ENCODE measurements at regions of chr17 and their contacts with region 1.

Region 1: GRCh38 chr17:45218895-45219661 is 2.6 kb upstream of the FMNL1 start:
- DNase-seq: peak; percentile 60 to 76
- ATAC-seq: peak; percentile 83 to 92
- H3K4me3 ChIP-seq: no peak overlapping the region
- H3K27ac ChIP-seq: no peak overlapping the region
- H3K4me1 ChIP-seq: peaks cover 0 to 4% of the 10 kb centered on the region in 2 donors
- H3K27me3 ChIP-seq: peaks cover 0 to 4% (median 0%) of the 10 kb centered on the region in 3 donors
- CTCF ChIP-seq: peak; percentile 89 to 99 (median 95)
- POLR2A ChIP-seq: no peak

Region 2: GRCh38 chr17:45235416-45236281 is 16.6 kb after region 1 on chr17:
- in situ Hi-C with region 1: no loop called
- intact Hi-C with region 1: loop called (anchors 1 kb)
- DNase-seq: peak; percentile 49 to 65
- ATAC-seq: peak; percentile 68 to 69
- H3K4me3 ChIP-seq: no peak overlapping the region
- H3K27ac ChIP-seq: no peak overlapping the region
- H3K4me1 ChIP-seq: peaks cover 1 to 3% of the 10 kb centered on the region in 2 donors
- H3K27me3 ChIP-seq: no peaks in the 10 kb centered on the region
- CTCF ChIP-seq: peak; percentile 53 to 85 (median 78)
- POLR2A ChIP-seq: no peak

Region 3: GRCh38 chr17:45247429-45248131 is 28.5 kb after region 1 on chr17:
- in situ Hi-C with region 1: no loop called
- intact Hi-C with region 1: no loop called
- DNase-seq: peak; percentile 43 to 69
- ATAC-seq: peak; percentile 47 to 60
- H3K4me3 ChIP-seq: peak overlapping the region; percentile 49 to 62 (median 56)
- H3K27ac ChIP-seq: peak overlapping the region in 1 of 4 donors; percentile 17
- H3K4me1 ChIP-seq: peaks cover 9 to 13% of the 10 kb centered on the region in 2 donors
- H3K27me3 ChIP-seq: peaks cover 0 to 13% (median 0%) of the 10 kb centered on the region in 3 donors
- CTCF ChIP-seq: no peak
- POLR2A ChIP-seq: peak in 1 of 2 donors; percentile 20

Region 4: GRCh38 chr17:45311760-45312476 is 92.8 kb after region 1 on chr17:
- in situ Hi-C with region 1: no loop called
- intact Hi-C with region 1: no loop called
- DNase-seq: peak; percentile 92 to 96
- ATAC-seq: peak; percentile 67 to 72
- H3K4me3 ChIP-seq: peak overlapping the region; percentile 3 to 50 (median 30)
- H3K27ac ChIP-seq: peak overlapping the region; percentile 88 to 98 (median 94)
- H3K4me1 ChIP-seq: peaks cover 86 to 91% of the 10 kb centered on the region in 2 donors
- H3K27me3 ChIP-seq: no peaks in the 10 kb centered on the region
- CTCF ChIP-seq: peak in 1 of 5 experiments; percentile 2
- POLR2A ChIP-seq: peak; percentile 80 to 89

Region 5: DNA sequence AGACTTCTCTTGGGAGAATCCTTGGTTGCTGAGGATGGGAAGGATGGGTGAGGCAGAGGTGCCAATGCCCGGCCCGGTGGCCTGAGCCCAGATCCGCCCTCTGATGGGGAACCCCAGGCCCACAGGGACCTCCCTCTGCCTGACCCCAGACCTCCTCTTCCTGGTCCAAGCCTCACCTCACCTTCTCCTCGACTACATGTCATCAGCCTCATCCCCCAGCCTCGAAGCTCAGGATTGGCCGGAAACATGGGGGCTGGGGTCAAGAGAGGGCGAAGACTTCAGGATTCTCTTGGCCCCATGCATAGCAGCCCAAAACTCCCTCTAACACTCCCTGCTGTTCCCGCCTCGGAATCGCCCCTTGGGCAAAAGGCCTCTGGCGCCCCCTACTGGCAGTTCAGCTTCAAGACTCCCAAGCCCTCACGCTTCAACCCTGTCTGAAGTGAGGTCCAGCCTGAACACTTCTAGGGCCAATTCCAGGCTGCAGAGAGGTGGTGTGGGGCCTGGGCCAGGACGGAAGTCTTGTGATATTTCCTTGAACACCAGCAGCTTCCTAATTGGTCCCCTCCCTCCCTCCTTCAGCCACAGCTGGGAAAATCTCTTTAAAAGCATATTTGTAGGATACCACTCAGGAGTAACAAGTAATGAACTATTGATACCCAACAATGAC is 166.4 kb after region 1 on chr17:
- in situ Hi-C with region 1: loop called (anchors 5 to 10 kb)
- intact Hi-C with region 1: loop called (anchors 1 kb)
- DNase-seq: peak; percentile 66 to 80
- ATAC-seq: peak; percentile 95 to 99
- H3K4me3 ChIP-seq: no peak overlapping the region
- H3K27ac ChIP-seq: no peak overlapping the region
- H3K4me1 ChIP-seq: peaks cover 0 to 6% of the 10 kb centered on the region in 2 donors
- H3K27me3 ChIP-seq: peaks cover 0 to 7% (median 0%) of the 10 kb centered on the region in 3 donors
- CTCF ChIP-seq: peak; percentile 97 to 100 (median 98)
- POLR2A ChIP-seq: no peak

Region 6: GRCh38 chr17:45841883-45842525 is 622.9 kb after region 1 on chr17:
- in situ Hi-C with region 1: loop called in 1 of 4 experiments (anchors 25 kb)
- intact Hi-C with region 1: no loop called
- DNase-seq: no peak
- ATAC-seq: no peak
- H3K4me3 ChIP-seq: no peak overlapping the region
- H3K27ac ChIP-seq: no peak overlapping the region
- H3K4me1 ChIP-seq: no peaks in the 10 kb centered on the region
- H3K27me3 ChIP-seq: no peaks in the 10 kb centered on the region
- CTCF ChIP-seq: no peak
- POLR2A ChIP-seq: no peak

Measured in gastrocnemius medialis (tissue), 4 donors.